ENCODE measurements at regions of chr3 and their contacts with region 1.

Region 1: DNA sequence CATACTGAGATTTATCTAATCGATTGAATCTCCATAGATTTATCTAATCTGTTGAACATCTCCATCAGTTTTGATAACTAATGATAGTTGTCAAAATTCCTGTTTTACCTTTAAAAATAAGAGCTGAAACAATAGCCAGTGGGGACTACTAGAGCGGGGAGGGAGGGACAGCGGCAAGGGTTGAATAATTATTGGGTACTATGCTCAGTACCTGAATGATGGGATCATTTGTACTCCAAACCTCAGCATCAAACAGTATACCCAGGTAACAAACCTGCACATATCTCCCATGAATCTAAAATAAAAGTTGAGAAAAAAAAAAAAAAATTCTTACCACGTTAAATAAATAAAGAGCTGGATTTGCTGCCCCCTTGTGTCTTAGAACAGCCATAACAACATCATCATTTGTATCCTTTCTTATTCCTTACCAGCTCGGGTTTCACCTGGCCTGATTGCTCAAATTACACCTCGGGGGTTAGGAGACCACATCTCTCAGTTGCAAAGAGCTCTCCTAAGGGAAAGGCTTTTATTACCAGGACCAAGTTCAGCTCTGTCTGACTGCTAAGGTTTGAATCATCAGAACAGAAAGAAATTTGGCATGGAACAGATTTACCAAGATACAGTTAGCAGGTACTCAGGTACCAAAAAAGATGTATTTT is 25.7 kb upstream of the RPL39L start:
- DNase-seq: peak; percentile 53 to 70 (median 64)
- ATAC-seq: peak; percentile 78
- H3K4me3 ChIP-seq: no peak overlapping the region
- H3K27ac ChIP-seq: no peak overlapping the region
- H3K4me1 ChIP-seq: no peaks in the 10 kb centered on the region
- H3K27me3 ChIP-seq: peaks cover 0 to 6% of the 10 kb centered on the region in 2 experiments; a peak in 1 of 5 replicates
- CTCF ChIP-seq: peak; percentile 61 to 75 (median 64); a peak in 5 of 6 replicates
- EP300 ChIP-seq: no peak
- POLR2A ChIP-seq: no peak
- RAD21 ChIP-seq: peak; percentile 67 to 77

Region 2: GRCh38 chr3:186849374-186849975 is 315.5 kb before region 1 on chr3:
- CTCF ChIA-PET with region 1: interaction called, 30 read pairs
- POLR2A ChIA-PET with region 1: no interaction called
- in situ Hi-C with region 1: loop called (anchors 10 kb)
- intact Hi-C with region 1: loop called (anchors 1 kb)
- DNase-seq: peak in 2 of 4 experiments; percentile 54 to 61
- ATAC-seq: peak; percentile 92
- H3K4me3 ChIP-seq: no peak overlapping the region
- H3K27ac ChIP-seq: no peak overlapping the region
- H3K4me1 ChIP-seq: no peaks in the 10 kb centered on the region; a peak in 1 of 5 replicates
- H3K27me3 ChIP-seq: no peaks in the 10 kb centered on the region
- CTCF ChIP-seq: peak; percentile 63 to 90 (median 77)
- EP300 ChIP-seq: peak; percentile 33; the same call in 1 of the 2 replicates
- POLR2A ChIP-seq: no peak
- RAD21 ChIP-seq: peak; percentile 96 to 98

Region 3: DNA sequence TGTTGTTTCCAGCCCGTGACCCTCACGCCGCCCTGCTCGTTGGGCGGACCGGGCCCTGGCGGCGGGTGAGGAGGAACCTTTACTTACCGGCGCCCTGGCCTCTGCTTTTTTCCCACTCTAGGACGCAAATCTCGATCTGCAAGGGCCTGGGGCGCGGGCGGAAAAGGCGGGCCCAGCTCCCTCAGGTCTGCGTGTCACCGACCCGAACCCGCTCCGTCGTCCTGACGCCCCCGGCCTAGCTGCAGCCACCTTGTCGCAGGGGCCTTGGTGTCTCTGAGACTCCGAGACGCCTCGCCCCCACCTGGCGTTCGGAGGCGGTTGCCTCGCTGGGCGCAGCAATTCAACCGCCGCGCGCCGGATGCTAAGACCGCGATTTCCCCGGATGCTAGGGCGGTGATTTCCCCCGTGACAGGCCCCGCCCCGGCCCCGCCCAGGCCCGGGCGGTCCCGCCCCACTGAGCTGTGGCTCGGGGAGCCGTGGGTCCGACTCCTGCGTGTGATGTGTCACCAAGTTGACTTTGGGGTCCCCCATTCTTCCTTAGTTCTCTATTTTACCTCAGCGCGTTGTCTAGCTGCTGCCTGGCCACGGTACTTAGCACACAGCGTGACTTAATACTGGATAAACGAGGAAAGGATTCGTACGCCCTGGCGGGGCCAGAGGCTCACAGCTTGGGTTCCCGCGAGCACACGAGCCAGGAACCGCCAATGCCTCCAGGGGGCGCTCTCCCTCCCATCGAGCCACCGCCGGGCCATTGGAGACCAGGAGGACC is 25.7 kb before region 1 on chr3 and contains the start of gene RPL39L:
- CTCF ChIA-PET with region 1: interaction called, 16 read pairs
- POLR2A ChIA-PET with region 1: interaction called, 5 read pairs
- in situ Hi-C with region 1: no loop called
- intact Hi-C with region 1: no loop called
- DNase-seq: peak; percentile 95 to 96 (median 95)
- ATAC-seq: peak; percentile 99
- H3K4me3 ChIP-seq: peak within 1 kb of the TSS; percentile 80
- H3K27ac ChIP-seq: peak within 1 kb of the TSS; percentile 91
- H3K4me1 ChIP-seq: peaks cover 3 to 8% of the 10 kb centered on the region in 2 experiments; a peak in 3 of 5 replicates
- H3K27me3 ChIP-seq: no peaks in the 10 kb centered on the region
- CTCF ChIP-seq: peak; percentile 88 to 96 (median 94)
- EP300 ChIP-seq: peak; percentile 32; the same call in 1 of the 2 replicates
- POLR2A ChIP-seq: peak; percentile 91
- RAD21 ChIP-seq: peak; percentile 29 to 52
- polyA plus RNA-seq, gene RPL39L: 15.0 to 31.4 TPM

Region 4: DNA sequence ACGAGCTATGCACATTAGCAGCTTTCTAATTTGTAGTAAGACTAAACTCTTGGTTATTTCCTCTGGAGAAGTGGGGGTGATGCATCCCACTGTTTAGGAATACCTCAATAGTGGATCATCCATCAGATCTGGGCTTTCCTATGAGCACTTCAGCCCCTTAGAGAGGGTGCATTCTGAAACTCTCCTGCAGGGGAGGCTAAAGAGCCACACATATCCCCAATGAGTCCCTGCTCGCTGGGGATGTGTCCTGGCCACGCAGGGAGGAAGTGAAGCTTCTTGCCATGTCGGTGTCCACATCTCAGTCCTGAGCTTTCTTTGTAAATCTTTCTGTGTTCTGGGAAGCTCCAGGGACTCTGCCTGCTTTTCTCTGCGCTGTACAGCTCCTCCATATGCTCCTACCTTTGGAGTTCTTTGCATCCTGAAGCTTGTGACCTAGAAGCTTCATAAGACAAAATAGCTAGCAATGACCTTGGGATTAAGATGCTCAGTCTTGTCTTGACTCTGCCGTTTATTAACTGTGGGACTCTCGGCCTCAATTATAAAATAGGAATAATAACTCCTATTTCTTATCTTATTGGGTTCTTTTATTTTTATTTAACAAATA is 154.8 kb after region 1 on chr3:
- CTCF ChIA-PET with region 1: no interaction called
- POLR2A ChIA-PET with region 1: no interaction called
- in situ Hi-C with region 1: no loop called
- intact Hi-C with region 1: no loop called
- DNase-seq: peak; percentile 61 to 67 (median 62)
- ATAC-seq: peak; percentile 97
- H3K4me3 ChIP-seq: no peak overlapping the region
- H3K27ac ChIP-seq: no peak overlapping the region
- H3K4me1 ChIP-seq: no peaks in the 10 kb centered on the region; a peak in 1 of 5 replicates
- H3K27me3 ChIP-seq: no peaks in the 10 kb centered on the region; a peak in 1 of 5 replicates
- CTCF ChIP-seq: peak; percentile 79 to 86 (median 82)
- EP300 ChIP-seq: no peak
- POLR2A ChIP-seq: no peak
- RAD21 ChIP-seq: peak; percentile 94 to 97